HCT116 (cell line): ENCODE measurements at regions of chr17 and their contacts with region 1.

Region 1: GRCh38 chr17:78448356-78448993 is 70.0 kb downstream of the PGS1 start:
- DNase-seq: no peak
- ATAC-seq: no peak
- H3K4me3 ChIP-seq: no peak overlapping the region
- H3K27ac ChIP-seq: no peak overlapping the region
- H3K4me1 ChIP-seq: no peaks in the 10 kb centered on the region; a peak in 1 of 4 replicates
- H3K27me3 ChIP-seq: no peaks in the 10 kb centered on the region
- CTCF ChIP-seq: peak in 2 of 3 experiments; percentile 42 to 52; a peak in 3 of 6 replicates
- POLR2A ChIP-seq: no peak
- RAD21 ChIP-seq: no peak

Region 2: GRCh38 chr17:78329263-78330059 is 119.0 kb before region 1 on chr17:
- CTCF ChIA-PET with region 1: no interaction called
- POLR2A ChIA-PET with region 1: no interaction called
- RAD21 ChIA-PET with region 1: no interaction called
- intact Hi-C with region 1: no loop called
- DNase-seq: peak; percentile 76
- ATAC-seq: peak; percentile 72
- H3K4me3 ChIP-seq: peak overlapping the region; percentile 11 to 15; a peak in 3 of 4 replicates
- H3K27ac ChIP-seq: peak overlapping the region; percentile 85
- H3K4me1 ChIP-seq: peaks cover 63 to 86% of the 10 kb centered on the region in 2 experiments
- H3K27me3 ChIP-seq: no peaks in the 10 kb centered on the region
- CTCF ChIP-seq: no peak; a peak in 1 of 6 replicates
- POLR2A ChIP-seq: no peak
- RAD21 ChIP-seq: no peak

Region 3: GRCh38 chr17:78532922-78533640 is 84.6 kb after region 1 on chr17:
- CTCF ChIA-PET with region 1: no interaction called
- POLR2A ChIA-PET with region 1: no interaction called
- RAD21 ChIA-PET with region 1: no interaction called
- intact Hi-C with region 1: no loop called
- DNase-seq: peak; percentile 27
- ATAC-seq: peak; percentile 59
- H3K4me3 ChIP-seq: no peak overlapping the region
- H3K27ac ChIP-seq: no peak overlapping the region
- H3K4me1 ChIP-seq: peaks cover 0 to 12% of the 10 kb centered on the region in 2 experiments; a peak in 2 of 4 replicates
- H3K27me3 ChIP-seq: no peaks in the 10 kb centered on the region
- CTCF ChIP-seq: no peak
- POLR2A ChIP-seq: no peak
- RAD21 ChIP-seq: no peak

Region 4: GRCh38 chr17:78708510-78708973 is 260.1 kb after region 1 on chr17:
- CTCF ChIA-PET with region 1: interaction called, 3 read pairs
- POLR2A ChIA-PET with region 1: no interaction called
- RAD21 ChIA-PET with region 1: no interaction called
- intact Hi-C with region 1: loop called (anchors 2 kb)
- DNase-seq: peak; percentile 56
- ATAC-seq: peak; percentile 99
- H3K4me3 ChIP-seq: no peak overlapping the region
- H3K27ac ChIP-seq: no peak overlapping the region
- H3K4me1 ChIP-seq: peaks cover 8 to 14% of the 10 kb centered on the region in 2 experiments
- H3K27me3 ChIP-seq: no peaks in the 10 kb centered on the region
- CTCF ChIP-seq: peak; percentile 91 to 100 (median 96)
- POLR2A ChIP-seq: no peak
- RAD21 ChIP-seq: peak; percentile 98

Region 5: DNA sequence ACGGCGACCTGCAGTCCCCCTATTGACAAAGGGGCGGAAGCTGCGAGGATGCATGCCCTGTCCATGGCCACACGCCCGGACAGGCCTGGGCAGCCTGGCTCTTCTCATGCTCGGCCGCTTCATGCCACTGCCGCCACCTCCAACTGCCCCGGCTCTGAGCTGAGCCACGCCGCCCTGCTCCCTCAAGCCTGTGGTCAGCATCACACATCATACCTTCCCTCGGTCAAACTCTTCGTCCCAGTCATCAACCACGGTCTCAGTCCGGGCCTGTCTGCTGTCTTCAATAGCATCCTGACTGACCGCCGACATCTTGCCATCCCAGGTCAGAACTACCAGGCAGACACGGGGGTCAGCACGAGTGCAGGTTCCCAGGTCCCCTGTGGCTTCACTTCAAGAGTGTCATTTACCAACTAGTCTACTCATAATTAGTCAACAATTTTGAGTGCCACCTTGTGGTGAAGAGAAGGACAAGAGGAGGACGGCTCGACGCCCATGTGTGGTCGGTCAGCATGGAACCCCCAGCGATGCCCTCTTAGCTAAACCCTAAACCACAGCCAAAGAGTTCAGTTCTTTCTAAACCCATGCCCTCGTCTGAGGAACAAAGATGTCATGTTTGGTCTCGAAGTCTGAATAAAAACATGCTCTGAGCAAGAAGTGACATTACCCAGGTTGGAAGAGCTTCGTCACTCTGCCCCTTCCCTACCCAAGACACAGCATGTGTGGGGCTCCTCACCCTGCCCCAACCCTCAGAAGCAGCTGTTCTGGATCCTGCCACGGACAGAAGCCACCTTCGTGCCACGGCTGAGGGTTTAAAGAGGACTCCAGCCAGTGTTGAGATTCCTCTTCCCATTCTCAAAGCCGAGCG is 350.5 kb after region 1 on chr17:
- CTCF ChIA-PET with region 1: no interaction called
- POLR2A ChIA-PET with region 1: no interaction called
- RAD21 ChIA-PET with region 1: no interaction called
- intact Hi-C with region 1: loop called (anchors 5 kb)
- DNase-seq: no peak
- ATAC-seq: peak; percentile 73
- H3K4me3 ChIP-seq: no peak overlapping the region
- H3K27ac ChIP-seq: no peak overlapping the region
- H3K4me1 ChIP-seq: no peaks in the 10 kb centered on the region
- H3K27me3 ChIP-seq: no peaks in the 10 kb centered on the region
- CTCF ChIP-seq: peak in 2 of 3 experiments; percentile 47 to 66; a peak in 4 of 6 replicates
- POLR2A ChIP-seq: no peak
- RAD21 ChIP-seq: peak; percentile 50